HCT116 (cell line): ENCODE measurements at regions of chr3 and their contacts with region 1.

Region 1: GRCh38 chr3:138862924-138863775 is 28.4 kb upstream of the PIK3CB start:
- DNase-seq: peak; percentile 81
- ATAC-seq: peak; percentile 84
- H3K4me3 ChIP-seq: peak overlapping the region; percentile 13 to 53
- H3K27ac ChIP-seq: peak overlapping the region; percentile 75
- H3K4me1 ChIP-seq: peaks cover 28 to 40% of the 10 kb centered on the region in 2 experiments
- H3K27me3 ChIP-seq: no peaks in the 10 kb centered on the region
- CTCF ChIP-seq: no peak
- POLR2A ChIP-seq: peak; percentile 44
- RAD21 ChIP-seq: peak; percentile 20; the same call in 1 of the 2 replicates

Region 2: DNA sequence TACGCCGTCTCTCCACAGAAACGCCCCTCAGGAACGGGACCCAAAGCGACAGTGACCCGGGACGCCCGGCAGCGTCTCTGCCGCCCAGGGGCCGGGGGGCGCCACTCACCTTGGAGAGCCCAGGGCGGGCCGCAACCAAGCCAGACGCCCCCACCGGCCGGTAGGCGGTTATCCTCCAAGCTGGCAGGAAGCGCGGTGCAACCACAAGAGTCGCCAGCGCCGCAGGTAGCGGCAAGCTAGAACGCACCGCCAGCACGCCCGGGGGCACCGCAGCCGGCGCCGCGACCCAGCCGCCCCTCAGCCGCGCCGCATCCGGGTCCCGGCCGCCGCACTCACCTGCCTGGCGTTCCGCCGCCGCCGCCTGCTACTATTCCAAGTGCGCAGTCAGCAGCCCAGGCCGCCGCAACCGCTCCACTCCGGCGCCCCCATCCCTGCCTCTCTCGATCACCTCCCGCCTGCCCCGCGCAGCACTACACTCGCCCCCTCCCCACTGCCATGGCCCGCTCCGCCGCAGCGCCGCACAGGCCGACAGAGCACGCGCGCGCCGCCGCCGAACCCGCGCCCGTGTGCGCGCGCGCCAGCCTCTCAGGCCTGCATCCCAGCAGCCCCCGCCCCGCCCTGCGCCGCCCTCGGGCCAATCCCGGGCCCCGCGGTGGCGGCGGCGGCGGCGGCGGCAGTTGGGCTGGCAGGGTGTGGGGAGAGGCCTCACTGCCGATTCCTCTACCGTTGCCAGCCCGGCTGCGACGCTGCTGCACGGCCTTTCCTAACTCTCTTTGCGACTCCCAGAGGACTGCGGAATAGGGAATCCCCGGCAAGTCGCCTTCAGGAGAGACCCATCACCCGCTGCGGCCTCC is 28.6 kb before region 1 on chr3 and contains the start of gene PIK3CB:
- CTCF ChIA-PET with region 1: no interaction called
- POLR2A ChIA-PET with region 1: interaction called, 4 read pairs
- RAD21 ChIA-PET with region 1: no interaction called
- intact Hi-C with region 1: loop called (anchors 1 kb)
- DNase-seq: peak; percentile 44
- ATAC-seq: peak; percentile 94
- H3K4me3 ChIP-seq: peak within 1 kb of the TSS; percentile 67 to 71
- H3K27ac ChIP-seq: peak within 1 kb of the TSS; percentile 93
- H3K4me1 ChIP-seq: peaks cover 9 to 19% of the 10 kb centered on the region in 2 experiments
- H3K27me3 ChIP-seq: no peaks in the 10 kb centered on the region
- CTCF ChIP-seq: peak in 2 of 3 experiments; percentile 32 to 50; a peak in 4 of 6 replicates
- POLR2A ChIP-seq: peak; percentile 93
- RAD21 ChIP-seq: peak; percentile 37
- total RNA-seq, gene PIK3CB: 44.3 TPM